CD14-positive monocyte (primary cell): ENCODE measurements at regions of chr5 and their contacts with region 1.

Region 1: DNA sequence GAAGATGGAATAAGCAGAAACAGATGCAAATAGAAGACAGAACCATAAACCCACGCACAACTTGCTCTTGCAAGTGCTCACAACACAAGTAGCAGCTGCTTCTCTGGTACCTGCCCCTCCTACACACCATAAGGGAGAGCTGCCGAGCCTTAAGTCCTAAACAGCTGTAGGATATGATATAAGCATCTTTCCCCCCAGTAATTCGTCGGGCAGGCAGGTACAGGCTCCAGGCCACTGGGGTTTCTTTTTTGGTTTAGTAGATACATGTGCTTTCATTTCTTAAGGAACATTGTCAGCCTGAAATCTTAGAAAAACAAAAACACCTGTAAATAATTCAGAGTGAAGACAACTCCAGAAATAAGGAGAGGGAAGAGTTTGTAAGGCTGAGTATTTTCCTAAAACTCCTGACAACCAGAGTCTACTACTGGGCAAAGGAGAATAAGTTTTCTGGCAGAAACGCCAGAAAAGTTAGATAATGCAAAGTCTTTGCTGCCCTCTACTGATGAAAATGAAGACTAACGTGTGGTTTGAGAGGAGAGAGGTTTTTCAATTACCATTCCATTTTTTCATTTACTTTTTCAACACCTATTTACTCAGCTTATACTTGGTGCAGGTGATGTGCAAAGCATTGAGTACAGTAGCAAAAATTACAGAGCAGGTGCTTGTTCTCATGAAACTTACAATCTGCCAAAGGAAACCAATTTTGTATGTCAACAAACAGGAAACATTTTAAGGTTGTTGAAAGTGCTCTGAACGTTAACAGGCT is 20.1 kb upstream of the TCERG1 start:
- DNase-seq: peak; percentile 9 to 35 (median 18)
- H3K4me3 ChIP-seq: no peak overlapping the region
- H3K4me3 Mint-ChIP-seq: no peak overlapping the region
- H3K27ac ChIP-seq: no peak overlapping the region
- H3K27ac Mint-ChIP-seq: no peak overlapping the region
- H3K4me1 ChIP-seq: no peaks in the 10 kb centered on the region
- H3K4me1 Mint-ChIP-seq: peaks cover 4% of the 10 kb centered on the region
- H3K27me3 ChIP-seq: no peaks in the 10 kb centered on the region
- H3K27me3 Mint-ChIP-seq: peaks cover 6 to 15% (median 11%) of the 10 kb centered on the region in 3 donors
- CTCF ChIP-seq: peak; percentile 76

Region 2: GRCh38 chr5:146291421-146292074 is 135.5 kb before region 1 on chr5:
- intact Hi-C with region 1: loop called (anchors 2 to 5 kb)
- DNase-seq: peak; percentile 12 to 35 (median 22)
- H3K4me3 ChIP-seq: no peak overlapping the region
- H3K4me3 Mint-ChIP-seq: no peak overlapping the region
- H3K27ac ChIP-seq: no peak overlapping the region
- H3K27ac Mint-ChIP-seq: no peak overlapping the region
- H3K4me1 ChIP-seq: no peaks in the 10 kb centered on the region
- H3K4me1 Mint-ChIP-seq: no peaks in the 10 kb centered on the region
- H3K27me3 ChIP-seq: no peaks in the 10 kb centered on the region
- H3K27me3 Mint-ChIP-seq: no peaks in the 10 kb centered on the region
- CTCF ChIP-seq: peak; percentile 75

Region 3: GRCh38 chr5:146378986-146379385 is 48.0 kb before region 1 on chr5:
- intact Hi-C with region 1: no loop called
- DNase-seq: no peak
- H3K4me3 ChIP-seq: no peak overlapping the region
- H3K4me3 Mint-ChIP-seq: peak overlapping the region in 1 of 2 donors; percentile 26
- H3K27ac ChIP-seq: no peak overlapping the region
- H3K27ac Mint-ChIP-seq: peak overlapping the region in 1 of 7 donors; percentile 28
- H3K4me1 ChIP-seq: no peaks in the 10 kb centered on the region
- H3K4me1 Mint-ChIP-seq: no peaks in the 10 kb centered on the region
- H3K27me3 ChIP-seq: peaks cover 0 to 12% of the 10 kb centered on the region in 2 donors
- H3K27me3 Mint-ChIP-seq: peaks cover 26 to 45% (median 29%) of the 10 kb centered on the region in 3 donors
- CTCF ChIP-seq: no peak